A549 (cell line): ENCODE measurements at regions of chr2 and their contacts with region 1.

Region 1: GRCh38 chr2:201795607-201796477 is 10.5 kb upstream of the CDK15 start:
- DNase-seq: peak; percentile 61 to 67
- ATAC-seq: peak; percentile 79 to 84; a peak in 5 of 6 replicates
- H3K4me3 ChIP-seq: no peak overlapping the region
- H3K27ac ChIP-seq: no peak overlapping the region
- H3K4me1 ChIP-seq: peaks cover 14% of the 10 kb centered on the region; the same call in 2 of the 3 replicates
- CTCF ChIP-seq: peak; percentile 64
- EP300 ChIP-seq: no peak
- POLR2A ChIP-seq: no peak
- RAD21 ChIP-seq: peak; percentile 67 to 74

Region 2: GRCh38 chr2:201785135-201785534 is 10.7 kb before region 1 on chr2:
- CTCF ChIA-PET with region 1: interaction called, 10 read pairs
- POLR2A ChIA-PET with region 1: no interaction called
- DNase-seq: no peak
- ATAC-seq: no peak
- H3K4me3 ChIP-seq: no peak overlapping the region
- H3K27ac ChIP-seq: no peak overlapping the region
- H3K4me1 ChIP-seq: 0 out of 3 replicates have a peak, but pooled peaks cover 3% of the 10 kb centered on the region
- CTCF ChIP-seq: no peak
- EP300 ChIP-seq: no peak
- POLR2A ChIP-seq: no peak
- RAD21 ChIP-seq: no peak